Activated T-helper 2 cell treated with anti-CD3 and anti-CD28 coated beads, Interferon-gamma antibody, Interleukin-2, Interleukin-4, amounts not matched to agents 10 μg/mL and 5 μg/mL and 100 μg/mL, durations not matched to agents 14 hours and 24 hours and 36 hours (primary cell): ENCODE measurements at regions of chr17 and their contacts with region 1.

Region 1: DNA sequence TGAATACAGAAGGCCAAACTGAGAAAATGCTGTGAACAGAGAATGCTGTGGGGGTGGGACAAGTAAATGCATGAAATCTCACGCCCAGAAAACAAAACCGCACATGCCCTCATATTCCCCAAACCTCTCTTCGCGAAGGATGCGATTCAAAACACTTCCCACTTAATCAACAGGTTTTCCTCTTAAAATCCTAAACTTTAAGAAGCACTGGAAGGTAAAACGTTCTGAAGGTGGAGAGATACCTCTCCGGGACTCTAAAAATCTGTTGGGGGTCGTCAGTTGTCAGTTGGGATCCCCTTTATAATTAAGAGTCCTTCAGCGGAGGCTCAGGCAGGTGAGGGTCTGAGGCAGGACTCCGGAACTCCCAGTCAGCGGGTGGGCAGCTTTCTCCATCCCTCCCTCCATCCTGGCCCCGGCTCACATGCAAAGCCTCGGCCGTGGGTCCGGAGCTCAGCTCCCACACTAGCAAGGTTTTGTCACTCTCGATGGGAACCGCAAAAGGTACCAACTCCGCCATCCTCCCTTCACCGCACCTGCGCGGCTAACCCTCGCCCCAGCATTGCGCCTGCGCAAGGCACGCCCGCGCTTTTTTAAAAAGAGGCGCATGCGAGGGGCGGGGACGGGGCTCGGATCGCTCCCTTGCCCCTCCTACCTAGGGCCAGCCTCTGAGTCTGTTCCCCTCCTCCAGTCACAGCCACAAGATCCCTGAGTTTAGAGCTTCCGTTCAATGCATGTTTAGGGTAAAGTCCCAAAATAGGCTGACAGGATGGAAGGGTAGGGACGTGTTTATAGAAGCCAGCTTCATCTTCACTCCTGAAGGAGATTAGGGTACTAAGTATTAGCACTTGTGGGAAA is at the start of gene RDM1:
- DNase-seq: peak; percentile 89
- H3K4me3 Mint-ChIP-seq: peak within 1 kb of the TSS; percentile 84
- H3K27ac Mint-ChIP-seq: peak within 1 kb of the TSS; percentile 84
- H3K4me1 Mint-ChIP-seq: peaks cover 25% of the 10 kb centered on the region
- H3K27me3 Mint-ChIP-seq: peaks cover 5% of the 10 kb centered on the region
- total RNA-seq, gene RDM1: 4.5 and 5.3 TPM in 2 replicates

Region 2: GRCh38 chr17:35879773-35880654 is 50.4 kb before region 1 on chr17 and contains the start of gene CCL5:
- intact Hi-C with region 1: loop called (anchors 5 kb)
- DNase-seq: peak; percentile 59
- H3K4me3 Mint-ChIP-seq: peak within 1 kb of the TSS; percentile 76
- H3K27ac Mint-ChIP-seq: peak within 1 kb of the TSS; percentile 97
- H3K4me1 Mint-ChIP-seq: peaks cover 49% of the 10 kb centered on the region
- H3K27me3 Mint-ChIP-seq: no peaks in the 10 kb centered on the region
- total RNA-seq, gene CCL5: 28.1 and 28.9 TPM in 2 replicates

Region 3: DNA sequence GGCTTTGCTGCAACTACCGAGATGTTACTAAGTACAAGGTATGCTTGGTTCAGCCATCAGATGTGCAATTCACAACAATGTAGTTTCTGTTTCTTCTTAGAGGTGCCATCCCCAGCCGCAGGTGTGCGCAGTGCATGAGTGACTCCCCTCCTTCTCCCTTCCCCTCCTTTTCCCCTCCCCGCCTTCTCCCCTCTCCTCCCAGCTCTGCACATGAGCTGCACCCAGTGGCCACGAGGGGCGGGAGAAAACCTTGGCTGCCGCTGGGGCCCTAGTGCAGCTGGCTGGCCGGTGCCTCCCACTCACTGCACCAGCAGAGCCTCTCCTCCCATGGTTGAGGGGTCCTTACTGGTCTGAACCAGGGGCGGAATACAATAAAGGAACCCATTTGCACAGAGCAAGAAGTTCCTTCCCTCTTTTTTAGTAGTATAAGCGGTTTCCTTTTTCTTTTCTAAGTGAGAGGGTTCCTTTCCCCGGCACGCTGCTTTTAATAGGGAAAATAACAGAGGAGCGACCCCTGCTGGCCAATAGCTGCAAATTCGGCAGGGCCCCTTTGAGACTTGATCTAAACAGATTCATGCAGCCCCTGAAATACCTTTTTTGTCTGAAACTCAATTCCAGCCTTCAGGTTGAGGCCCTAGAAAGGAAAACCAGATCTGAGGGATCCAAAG is 78.7 kb after region 1 on chr17:
- intact Hi-C with region 1: no loop called
- DNase-seq: no peak
- H3K4me3 Mint-ChIP-seq: no peak overlapping the region
- H3K27ac Mint-ChIP-seq: no peak overlapping the region
- H3K4me1 Mint-ChIP-seq: peaks cover 3% of the 10 kb centered on the region
- H3K27me3 Mint-ChIP-seq: peaks cover 14% of the 10 kb centered on the region